ENCODE measurements at regions of chr6 and their contacts with region 1.

Region 1: DNA sequence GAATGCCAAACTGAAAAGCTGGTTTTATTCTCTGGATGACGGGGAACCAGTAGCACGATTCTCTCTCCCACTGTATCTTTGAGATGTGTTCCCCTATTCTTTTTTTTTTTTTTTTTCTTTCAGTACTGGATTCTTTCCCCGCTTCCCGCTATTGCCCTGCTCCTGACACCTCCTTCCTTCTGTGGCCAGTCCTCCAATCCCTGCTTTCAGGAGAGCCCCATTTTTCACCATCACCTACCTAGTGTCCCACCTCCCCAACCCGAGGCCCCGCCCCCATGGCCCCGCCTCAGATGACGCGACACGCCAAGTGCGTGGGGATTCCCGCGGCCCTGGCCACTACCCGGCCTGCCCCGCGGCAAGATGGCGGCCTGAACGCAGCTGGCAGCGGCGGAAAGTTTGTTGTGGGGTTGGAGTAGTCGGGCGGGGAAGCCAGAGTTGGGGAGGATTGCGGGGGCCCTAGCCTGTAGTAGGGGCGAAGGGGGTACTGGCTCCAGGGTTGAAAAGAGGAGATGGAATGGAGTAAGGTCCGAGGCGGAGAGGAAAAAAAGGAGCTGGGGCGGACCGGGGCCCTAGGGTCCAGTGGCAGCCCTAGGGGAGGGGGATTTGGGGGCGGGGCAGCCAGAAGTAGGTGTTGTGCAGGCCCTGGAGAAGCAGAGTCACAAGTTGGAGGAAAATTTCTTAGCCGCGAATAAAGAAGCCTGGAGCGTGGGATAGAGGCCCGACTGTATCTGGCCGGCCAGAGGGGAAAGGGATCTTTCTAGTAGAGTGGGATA is at the start of gene TJAP1:
- DNase-seq: peak; percentile 96 to 97
- ATAC-seq: peak; percentile 100
- H3K4me3 ChIP-seq: peak within 1 kb of the TSS; percentile 65
- H3K4me3 Mint-ChIP-seq: peak within 1 kb of the TSS; percentile 97
- H3K27ac ChIP-seq: peak within 1 kb of the TSS; percentile 87
- H3K27ac Mint-ChIP-seq: peak within 1 kb of the TSS; percentile 92 to 100
- H3K4me1 ChIP-seq: peaks cover 13% of the 10 kb centered on the region
- H3K4me1 Mint-ChIP-seq: peaks cover 29 to 35% of the 10 kb centered on the region in 2 donors
- H3K27me3 ChIP-seq: no peaks in the 10 kb centered on the region
- H3K27me3 Mint-ChIP-seq: no peaks in the 10 kb centered on the region
- CTCF ChIP-seq: no peak
- total RNA-seq, gene TJAP1: 26.7 to 33.8 (median 29.9) TPM

Region 2: GRCh38 chr6:43421831-43422230 is 55.6 kb before region 1 on chr6:
- intact Hi-C with region 1: no loop called
- DNase-seq: no peak
- ATAC-seq: no peak
- H3K4me3 ChIP-seq: no peak overlapping the region
- H3K4me3 Mint-ChIP-seq: no peak overlapping the region
- H3K27ac ChIP-seq: no peak overlapping the region
- H3K27ac Mint-ChIP-seq: no peak overlapping the region
- H3K4me1 ChIP-seq: peaks cover 4% of the 10 kb centered on the region
- H3K4me1 Mint-ChIP-seq: no peaks in the 10 kb centered on the region
- H3K27me3 ChIP-seq: no peaks in the 10 kb centered on the region
- H3K27me3 Mint-ChIP-seq: peaks cover 3 to 9% of the 10 kb centered on the region in 2 donors
- CTCF ChIP-seq: no peak

Region 3: GRCh38 chr6:43496370-43497128 is 19.1 kb after region 1 on chr6:
- intact Hi-C with region 1: no loop called
- DNase-seq: peak in 1 of 2 donors; percentile 45
- ATAC-seq: peak in 2 of 3 donors; percentile 51 to 53
- H3K4me3 ChIP-seq: no peak overlapping the region
- H3K4me3 Mint-ChIP-seq: no peak overlapping the region
- H3K27ac ChIP-seq: no peak overlapping the region
- H3K27ac Mint-ChIP-seq: no peak overlapping the region
- H3K4me1 ChIP-seq: peaks cover 19% of the 10 kb centered on the region
- H3K4me1 Mint-ChIP-seq: peaks cover 20% of the 10 kb centered on the region in 2 donors
- H3K27me3 ChIP-seq: no peaks in the 10 kb centered on the region
- H3K27me3 Mint-ChIP-seq: no peaks in the 10 kb centered on the region
- CTCF ChIP-seq: no peak

Region 4: GRCh38 chr6:43516697-43517504 is 39.5 kb after region 1 on chr6 and contains the starts of genes POLR1C and YIPF3:
- intact Hi-C with region 1: loop called (anchors 5 kb)
- DNase-seq: peak; percentile 95 to 99
- ATAC-seq: peak; percentile 94 to 95 (median 95)
- H3K4me3 ChIP-seq: peak within 1 kb of the TSS; percentile 86
- H3K4me3 Mint-ChIP-seq: no peak within 1 kb of the TSS
- H3K27ac ChIP-seq: peak within 1 kb of the TSS; percentile 62
- H3K27ac Mint-ChIP-seq: no peak within 1 kb of the TSS
- H3K4me1 ChIP-seq: peaks cover 26% of the 10 kb centered on the region
- H3K4me1 Mint-ChIP-seq: peaks cover 1 to 14% of the 10 kb centered on the region in 2 donors
- H3K27me3 ChIP-seq: no peaks in the 10 kb centered on the region
- H3K27me3 Mint-ChIP-seq: no peaks in the 10 kb centered on the region
- CTCF ChIP-seq: no peak
- total RNA-seq, gene POLR1C: 22.3 to 29.3 (median 25.8) TPM
- total RNA-seq, gene YIPF3: 59.3 to 78.4 (median 70.0) TPM

Measured in natural killer cell (primary cell).